Lower leg skin (tissue), 4 donors: ENCODE measurements at regions of chr4 and their contacts with region 1.

Region 1: GRCh38 chr4:136962868-136963267 is 569.4 kb downstream of the PCDH18 start:
- DNase-seq: no peak
- H3K4me3 ChIP-seq: no peak overlapping the region
- CTCF ChIP-seq: no peak
- POLR2A ChIP-seq: no peak

Region 2: GRCh38 chr4:136803430-136803829 is 159.4 kb before region 1 on chr4:
- intact Hi-C with region 1: no loop called
- DNase-seq: no peak
- H3K4me3 ChIP-seq: no peak overlapping the region
- CTCF ChIP-seq: no peak
- POLR2A ChIP-seq: no peak

Region 3: DNA sequence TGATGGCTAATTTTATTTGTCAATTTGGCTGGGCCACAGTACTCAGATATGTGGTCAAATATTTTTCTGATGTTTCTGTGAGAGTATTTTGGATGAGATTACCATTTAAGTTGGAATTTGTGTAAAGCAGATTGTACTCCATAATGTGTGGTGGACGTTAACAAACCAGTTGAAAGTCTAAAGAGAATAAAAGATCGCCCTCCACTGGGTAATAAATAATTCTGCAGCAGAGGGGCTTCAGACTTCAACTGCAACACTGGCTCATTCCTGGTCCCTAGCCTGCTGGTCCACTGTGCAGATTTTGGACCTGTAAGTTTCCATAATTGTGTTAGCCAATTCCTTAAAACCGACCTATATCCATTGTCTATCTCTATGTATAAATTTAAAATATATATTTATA is 29.2 kb after region 1 on chr4:
- intact Hi-C with region 1: no loop called
- DNase-seq: no peak
- H3K4me3 ChIP-seq: no peak overlapping the region
- CTCF ChIP-seq: no peak
- POLR2A ChIP-seq: no peak

Region 4: DNA sequence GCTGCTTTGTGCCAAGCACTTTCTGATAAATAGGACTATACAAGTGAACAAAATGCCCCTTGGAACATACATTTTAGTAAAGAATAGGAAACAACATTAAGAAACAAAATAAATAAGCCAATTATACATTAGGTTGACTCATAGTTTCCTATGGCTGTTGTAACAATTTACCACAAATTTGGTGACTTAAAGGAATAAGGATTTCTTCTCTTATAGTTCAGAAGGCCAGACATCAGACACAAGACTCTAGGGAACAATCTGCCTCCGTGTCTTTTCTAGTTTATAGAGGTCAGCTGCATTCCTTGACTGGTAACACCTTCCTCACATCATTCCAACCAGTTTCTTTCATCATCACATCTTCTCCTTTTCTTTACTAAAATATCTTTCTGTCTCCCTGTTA is 805.3 kb after region 1 on chr4:
- intact Hi-C with region 1: loop called (anchors 5 kb)
- DNase-seq: no peak
- H3K4me3 ChIP-seq: no peak overlapping the region
- CTCF ChIP-seq: no peak
- POLR2A ChIP-seq: no peak